Motor neuron (in vitro differentiated cells): ENCODE measurements at regions of chr9 and their contacts with region 1.

Region 1: GRCh38 chr9:5186416-5187169 is 1.2 kb upstream of the INSL6 start:
- ATAC-seq: peak in 5 of 8 experiments; percentile 41 to 94 (median 83)
- H3K4me3 ChIP-seq: no peak overlapping the region
- H3K27ac ChIP-seq: no peak overlapping the region
- H3K4me1 ChIP-seq: no peaks in the 10 kb centered on the region

Region 2: DNA sequence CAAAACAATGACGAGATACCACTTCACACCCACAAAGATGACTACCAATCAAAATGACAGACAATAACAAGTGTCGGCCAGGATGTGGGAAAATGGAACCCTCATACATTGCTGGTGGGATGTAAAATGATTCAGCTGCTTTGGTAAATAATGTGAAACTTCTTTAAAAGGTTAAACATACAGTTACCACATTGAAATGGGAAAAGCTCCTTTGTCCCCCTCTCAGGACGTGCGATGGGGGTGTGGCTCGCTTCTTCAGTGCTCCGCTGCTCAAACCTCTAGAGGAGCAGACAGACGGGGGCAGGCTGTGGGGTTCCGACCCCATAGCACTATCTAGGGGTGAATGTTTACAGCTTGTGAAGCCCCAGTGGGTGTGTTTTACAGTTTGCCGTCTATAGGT is 532.5 kb before region 1 on chr9:
- in situ Hi-C with region 1: no loop called
- ATAC-seq: no peak
- H3K4me3 ChIP-seq: no peak overlapping the region
- H3K27ac ChIP-seq: no peak overlapping the region
- H3K4me1 ChIP-seq: no peaks in the 10 kb centered on the region

Region 3: DNA sequence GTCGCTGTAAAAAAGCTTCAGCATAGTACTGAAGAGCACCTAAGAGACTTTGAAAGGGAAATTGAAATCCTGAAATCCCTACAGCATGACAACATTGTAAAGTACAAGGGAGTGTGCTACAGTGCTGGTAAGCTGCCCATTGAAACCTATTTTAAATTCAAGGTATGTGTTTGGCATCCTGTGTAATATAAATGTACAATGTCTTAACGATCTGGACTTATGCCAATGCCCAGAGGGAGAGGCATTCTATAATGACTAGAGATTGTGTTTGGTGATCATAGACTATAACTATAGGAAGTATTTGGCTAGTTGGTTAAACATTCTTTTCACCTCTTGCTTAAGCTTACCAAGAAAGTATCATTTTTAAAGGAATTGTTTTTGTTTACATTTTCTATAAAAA is 96.9 kb before region 1 on chr9:
- in situ Hi-C with region 1: no loop called
- ATAC-seq: peak in 1 of 8 experiments; percentile 34
- H3K4me3 ChIP-seq: no peak overlapping the region
- H3K27ac ChIP-seq: no peak overlapping the region
- H3K4me1 ChIP-seq: no peaks in the 10 kb centered on the region

Region 4: DNA sequence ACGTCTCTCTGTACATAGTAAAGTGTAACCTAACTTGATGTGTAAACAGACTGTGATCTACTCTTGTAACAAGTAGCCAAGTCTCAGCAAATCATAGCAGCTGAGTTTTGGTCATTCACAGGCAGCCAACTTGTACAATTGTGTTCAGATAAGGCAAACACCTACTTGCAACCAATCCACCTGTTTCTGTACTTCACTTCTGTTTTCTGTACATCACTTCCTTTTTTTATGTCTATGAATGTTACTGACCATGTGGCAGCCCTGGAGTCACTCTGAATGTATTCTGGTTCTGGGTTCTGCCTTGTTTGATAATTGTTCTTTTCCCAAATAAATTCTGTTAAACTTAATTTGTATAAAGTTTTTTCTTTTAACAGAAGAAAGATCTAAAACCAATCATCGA is 91.9 kb after region 1 on chr9:
- in situ Hi-C with region 1: loop called in 1 of 9 experiments (anchors 25 kb)
- ATAC-seq: no peak
- H3K4me3 ChIP-seq: no peak overlapping the region
- H3K27ac ChIP-seq: no peak overlapping the region
- H3K4me1 ChIP-seq: no peaks in the 10 kb centered on the region

Region 5: DNA sequence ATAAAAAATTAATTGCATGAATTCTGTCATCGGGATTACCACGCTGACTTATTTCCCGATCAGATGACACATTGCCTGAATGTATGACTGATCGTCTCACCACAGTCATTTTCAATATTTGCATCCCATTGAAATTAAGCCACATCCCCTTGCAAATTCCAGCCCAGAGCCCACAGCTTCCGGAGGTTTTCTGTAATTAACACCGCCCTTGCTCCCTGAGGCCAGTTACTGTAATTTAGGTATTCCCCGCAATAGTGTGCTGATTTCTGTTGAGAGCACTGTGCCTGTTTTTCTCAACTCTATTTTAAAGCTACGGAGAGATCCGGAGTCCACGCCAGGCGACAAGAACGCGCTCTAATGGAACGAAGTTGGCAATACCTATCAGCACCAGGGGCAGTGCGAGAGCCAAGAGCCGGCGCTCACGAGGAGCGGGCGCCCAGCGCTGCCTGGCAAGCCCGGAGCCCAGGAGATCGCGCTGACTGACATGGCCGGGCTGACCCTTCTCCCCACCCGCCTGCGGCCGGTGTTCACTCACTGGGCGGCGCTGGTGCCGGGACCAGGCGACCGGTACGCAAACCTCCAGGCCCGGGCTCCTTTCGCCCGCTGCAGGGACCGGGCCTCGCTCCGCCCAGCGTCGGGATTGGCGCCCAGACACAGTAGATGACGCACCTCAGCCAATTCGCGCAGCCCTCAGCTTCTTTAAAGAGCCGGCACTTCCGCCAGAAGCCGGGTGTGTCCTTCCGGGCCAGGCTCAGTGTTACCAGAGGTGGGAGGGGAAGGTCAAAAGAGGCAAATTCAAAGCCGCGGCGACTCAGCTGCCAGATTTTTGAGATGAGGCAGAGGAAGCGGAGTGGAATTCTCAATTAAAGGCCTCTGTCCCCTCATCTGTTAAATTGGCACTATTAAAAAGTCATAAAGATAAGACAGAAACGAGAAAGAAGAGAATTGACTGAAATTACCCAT is 250.9 kb after region 1 on chr9 and contains the start of gene PLGRKT:
- in situ Hi-C with region 1: loop called in 3 of 9 experiments (anchors 25 kb)
- ATAC-seq: peak; percentile 85 to 99 (median 98)
- H3K4me3 ChIP-seq: peak within 1 kb of the TSS; percentile 48 to 84 (median 53)
- H3K27ac ChIP-seq: peak within 1 kb of the TSS; percentile 50 to 78
- H3K4me1 ChIP-seq: peaks cover 11 to 13% of the 10 kb centered on the region in 2 donors
- total RNA-seq, gene PLGRKT: 21.5 to 32.0 (median 26.1) TPM

Region 6: DNA sequence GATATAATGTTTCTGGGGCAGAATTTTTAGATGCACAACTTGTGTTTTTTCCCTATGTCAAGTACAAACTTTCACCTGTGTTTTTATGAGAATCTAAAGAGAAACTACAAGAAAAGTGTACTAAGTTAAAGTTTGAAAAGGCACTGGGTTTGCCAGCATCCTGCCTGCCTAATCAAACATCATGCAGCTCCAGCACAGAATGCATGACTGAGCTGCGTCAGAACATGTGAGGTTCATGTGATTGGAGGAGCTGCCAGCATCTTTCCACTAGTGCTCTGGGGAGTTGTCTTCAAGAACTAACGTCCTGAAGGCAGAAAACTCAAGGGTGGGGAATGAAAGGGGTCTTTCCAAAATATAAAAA is 396.2 kb after region 1 on chr9:
- in situ Hi-C with region 1: loop called in 3 of 9 experiments (anchors 25 kb)
- ATAC-seq: peak in 5 of 8 experiments; percentile 41 to 79 (median 69)
- H3K4me3 ChIP-seq: no peak overlapping the region
- H3K27ac ChIP-seq: no peak overlapping the region
- H3K4me1 ChIP-seq: no peaks in the 10 kb centered on the region